CD4-positive, alpha-beta T cell (primary cell): ENCODE measurements at regions of chr15 and their contacts with region 1.

Region 1: GRCh38 chr15:88828791-88829190 is 25.6 kb downstream of the ACAN start:
- DNase-seq: no peak
- ATAC-seq: no peak
- H3K4me3 ChIP-seq: no peak overlapping the region
- H3K4me3 Mint-ChIP-seq: no peak overlapping the region
- H3K27ac ChIP-seq: no peak overlapping the region
- H3K27ac Mint-ChIP-seq: no peak overlapping the region
- H3K4me1 ChIP-seq: no peaks in the 10 kb centered on the region
- H3K4me1 Mint-ChIP-seq: no peaks in the 10 kb centered on the region
- H3K27me3 ChIP-seq: no peaks in the 10 kb centered on the region
- H3K27me3 Mint-ChIP-seq: peaks cover 1% of the 10 kb centered on the region
- CTCF ChIP-seq: no peak

Region 2: DNA sequence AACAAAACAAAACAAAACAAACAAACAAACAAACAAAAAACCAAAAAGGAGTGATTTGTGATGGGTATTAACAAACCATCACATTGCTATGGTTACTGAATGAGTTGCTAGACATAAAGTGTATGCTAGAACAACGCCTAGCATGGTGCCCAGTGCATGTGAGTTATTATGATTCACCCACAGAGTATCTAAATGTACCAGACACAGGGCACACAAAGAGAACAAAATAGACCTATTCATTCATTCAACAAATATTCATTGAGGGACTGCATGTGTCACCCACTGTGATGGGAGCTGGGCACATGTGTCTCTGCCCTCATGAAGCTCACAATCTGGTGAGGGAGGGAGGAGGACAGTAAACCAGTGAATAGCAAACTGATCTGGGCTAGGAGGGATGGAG is 37.2 kb before region 1 on chr15:
- CTCF ChIA-PET with region 1: no interaction called
- POLR2A ChIA-PET with region 1: no interaction called
- intact Hi-C with region 1: loop called in 1 of 2 experiments (anchors 1 kb)
- DNase-seq: no peak
- ATAC-seq: no peak
- H3K4me3 ChIP-seq: no peak overlapping the region
- H3K4me3 Mint-ChIP-seq: no peak overlapping the region
- H3K27ac ChIP-seq: no peak overlapping the region
- H3K27ac Mint-ChIP-seq: no peak overlapping the region
- H3K4me1 ChIP-seq: no peaks in the 10 kb centered on the region
- H3K4me1 Mint-ChIP-seq: no peaks in the 10 kb centered on the region
- H3K27me3 ChIP-seq: peaks cover 13 to 42% of the 10 kb centered on the region in 2 experiments
- H3K27me3 Mint-ChIP-seq: peaks cover 53% of the 10 kb centered on the region
- CTCF ChIP-seq: no peak